ENCODE measurements at regions of chr17 and their contacts with region 1.

Region 1: GRCh38 chr17:41548844-41549595 is 20.9 kb upstream of the KRT19 start:
- DNase-seq: peak; percentile 86
- ATAC-seq: peak; percentile 80
- H3K4me3 ChIP-seq: no peak overlapping the region
- H3K27ac ChIP-seq: peak overlapping the region; percentile 72
- H3K4me1 ChIP-seq: peaks cover 21% of the 10 kb centered on the region
- H3K27me3 ChIP-seq: no peaks in the 10 kb centered on the region
- CTCF ChIP-seq: peak; percentile 96
- POLR2A ChIP-seq: peak; percentile 17; the same call in 1 of the 2 replicates
- RAD21 ChIP-seq: peak; percentile 89

Region 2: DNA sequence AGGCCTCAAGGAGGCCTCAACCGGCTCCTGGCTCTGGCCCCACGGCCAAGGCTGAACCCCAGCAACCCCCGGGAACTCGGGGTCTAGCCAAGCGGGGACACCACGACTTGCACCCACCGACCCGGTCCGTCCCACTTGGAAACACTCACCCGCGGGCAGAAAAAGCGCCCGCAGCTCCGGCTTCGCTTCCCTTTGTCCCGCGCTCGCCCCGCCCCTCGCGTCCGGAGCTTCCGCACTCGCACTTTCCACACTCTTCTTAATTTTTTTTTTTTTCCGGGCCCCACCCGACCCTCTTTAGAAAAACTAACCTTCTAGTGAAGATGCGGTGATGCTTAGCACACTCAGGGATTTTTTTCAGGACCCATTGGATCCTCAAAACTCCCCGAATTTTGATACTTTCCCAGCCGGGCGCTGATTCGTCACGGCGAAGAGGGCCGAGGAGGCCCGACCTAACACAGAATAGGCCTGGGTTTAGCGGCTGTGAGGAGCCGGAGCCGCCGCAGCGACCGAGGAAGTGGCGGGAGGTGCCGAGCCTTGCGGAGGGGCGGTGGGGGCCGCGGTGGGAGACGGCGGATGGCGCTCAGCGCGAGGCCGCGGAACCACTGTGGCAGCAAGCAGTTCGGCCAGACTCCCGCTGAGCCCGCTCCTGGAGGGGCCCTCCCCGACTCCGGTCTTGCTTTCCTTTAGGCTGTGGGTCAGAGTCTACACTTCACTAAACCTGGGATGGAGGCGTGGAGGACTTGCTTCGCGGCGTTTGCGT is 901.2 kb before region 1 on chr17 and contains the start of gene SMARCE1:
- CTCF ChIA-PET with region 1: no interaction called
- POLR2A ChIA-PET with region 1: no interaction called
- dilution Hi-C with region 1: no loop called
- in situ Hi-C with region 1: no loop called
- intact Hi-C with region 1: loop called (anchors 5 kb)
- DNase-seq: peak; percentile 67
- ATAC-seq: peak; percentile 84
- H3K4me3 ChIP-seq: peak within 1 kb of the TSS; percentile 93
- H3K27ac ChIP-seq: peak within 1 kb of the TSS; percentile 94
- H3K4me1 ChIP-seq: peaks cover 5% of the 10 kb centered on the region
- H3K27me3 ChIP-seq: no peaks in the 10 kb centered on the region
- CTCF ChIP-seq: no peak
- POLR2A ChIP-seq: peak; percentile 75
- RAD21 ChIP-seq: no peak
- total RNA-seq, gene SMARCE1: 119 and 169 TPM in 2 replicates

Region 3: DNA sequence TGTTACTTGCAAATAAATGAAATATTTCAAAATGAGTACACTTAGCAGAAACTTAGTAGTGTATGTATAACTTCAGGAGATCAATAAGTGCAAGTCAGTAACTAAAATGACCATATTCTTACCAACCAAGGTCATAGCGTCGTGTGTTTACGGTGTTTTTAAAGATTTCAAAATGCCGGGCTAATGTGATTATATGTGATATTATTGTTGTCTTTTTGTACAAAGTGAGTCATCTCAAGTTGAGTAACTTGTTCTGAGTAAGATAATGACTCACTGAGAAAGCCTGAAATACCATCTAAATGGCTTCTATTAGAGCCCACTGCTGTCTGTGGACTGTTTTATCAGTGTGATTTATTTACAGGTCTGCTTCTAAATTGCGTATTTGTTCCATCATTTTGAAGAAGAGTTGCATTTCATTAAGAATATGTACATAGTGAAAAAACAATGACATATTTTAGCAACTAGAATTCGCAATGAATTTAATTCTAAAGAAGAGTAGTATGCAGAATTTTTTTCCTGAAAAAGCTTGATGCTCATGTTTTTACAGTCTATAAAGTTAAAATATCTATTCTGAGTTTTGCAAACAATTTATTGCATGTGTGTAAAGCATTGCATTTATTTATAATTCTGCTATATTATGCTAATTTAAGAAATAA is 694.7 kb before region 1 on chr17:
- CTCF ChIA-PET with region 1: interaction called, 24 read pairs
- POLR2A ChIA-PET with region 1: no interaction called
- dilution Hi-C with region 1: no loop called
- in situ Hi-C with region 1: no loop called
- intact Hi-C with region 1: loop called (anchors 1 kb)
- DNase-seq: peak; percentile 93
- ATAC-seq: peak; percentile 75
- H3K4me3 ChIP-seq: no peak overlapping the region
- H3K27ac ChIP-seq: no peak overlapping the region
- H3K4me1 ChIP-seq: peaks cover 19% of the 10 kb centered on the region
- H3K27me3 ChIP-seq: no peaks in the 10 kb centered on the region
- CTCF ChIP-seq: no peak
- POLR2A ChIP-seq: no peak
- RAD21 ChIP-seq: 0 out of 2 replicates have a peak, but pooled peaks have one; percentile 6

Region 4: DNA sequence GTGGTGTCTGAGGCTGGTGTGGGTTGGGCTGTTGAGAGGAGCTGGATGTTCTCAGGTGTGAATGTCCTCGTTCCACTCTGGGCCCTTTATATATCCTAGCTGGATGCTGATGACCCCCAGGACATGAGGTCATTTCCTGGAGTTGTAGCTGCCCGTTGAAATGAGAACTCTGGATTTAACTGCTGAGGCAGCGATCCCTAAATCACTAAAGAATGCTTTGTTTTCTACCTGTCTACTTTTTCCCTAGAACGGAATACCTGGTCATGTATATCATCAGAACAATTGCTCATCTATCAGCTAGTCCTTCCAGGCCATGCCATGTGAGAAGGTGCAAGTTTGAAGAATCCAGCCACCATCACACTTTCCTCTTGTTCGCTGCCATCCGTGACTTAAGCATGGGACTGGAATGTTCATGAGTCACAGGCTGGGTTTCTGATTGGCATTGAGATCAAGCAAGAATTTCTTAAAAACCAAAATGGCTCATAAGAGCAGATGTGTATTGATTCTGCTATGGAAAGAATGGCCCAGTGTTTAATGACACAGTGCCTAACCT is 488.9 kb before region 1 on chr17 and contains the start of gene KRTAP2-3:
- CTCF ChIA-PET with region 1: no interaction called
- POLR2A ChIA-PET with region 1: no interaction called
- dilution Hi-C with region 1: no loop called
- in situ Hi-C with region 1: no loop called
- intact Hi-C with region 1: loop called (anchors 2 kb)
- DNase-seq: peak; percentile 97
- ATAC-seq: peak; percentile 44
- H3K4me3 ChIP-seq: no peak within 1 kb of the TSS
- H3K27ac ChIP-seq: peak within 1 kb of the TSS; percentile 94
- H3K4me1 ChIP-seq: peaks cover 16% of the 10 kb centered on the region
- H3K27me3 ChIP-seq: no peaks in the 10 kb centered on the region
- CTCF ChIP-seq: no peak
- POLR2A ChIP-seq: no peak
- RAD21 ChIP-seq: no peak
- total RNA-seq, gene KRTAP2-3: 1.4 TPM in 2 replicates

Region 5: GRCh38 chr17:41329281-41329948 is 219.6 kb before region 1 on chr17:
- CTCF ChIA-PET with region 1: interaction called, 4 read pairs
- POLR2A ChIA-PET with region 1: no interaction called
- dilution Hi-C with region 1: no loop called
- in situ Hi-C with region 1: no loop called
- intact Hi-C with region 1: loop called (anchors 2 kb)
- DNase-seq: peak; percentile 56
- ATAC-seq: peak; percentile 96
- H3K4me3 ChIP-seq: no peak overlapping the region
- H3K27ac ChIP-seq: no peak overlapping the region
- H3K4me1 ChIP-seq: no peaks in the 10 kb centered on the region
- H3K27me3 ChIP-seq: no peaks in the 10 kb centered on the region
- CTCF ChIP-seq: peak; percentile 79
- POLR2A ChIP-seq: no peak
- RAD21 ChIP-seq: peak; percentile 82

Region 6: GRCh38 chr17:41648411-41649195 is 99.6 kb after region 1 on chr17:
- CTCF ChIA-PET with region 1: interaction called, 28 read pairs
- POLR2A ChIA-PET with region 1: interaction called, 22 read pairs
- dilution Hi-C with region 1: no loop called
- in situ Hi-C with region 1: no loop called
- intact Hi-C with region 1: loop called (anchors 1 kb)
- DNase-seq: peak; percentile 77
- ATAC-seq: peak; percentile 92
- H3K4me3 ChIP-seq: 0 out of 2 replicates have a peak overlapping the region, but pooled peaks have one; percentile 9
- H3K27ac ChIP-seq: peak overlapping the region; percentile 79
- H3K4me1 ChIP-seq: peaks cover 14% of the 10 kb centered on the region
- H3K27me3 ChIP-seq: no peaks in the 10 kb centered on the region; the same call in 1 of the 2 replicates
- CTCF ChIP-seq: peak; percentile 84
- POLR2A ChIP-seq: no peak
- RAD21 ChIP-seq: peak; percentile 57